Adrenal gland (tissue), 19 donors: ENCODE measurements at regions of chr4 and their contacts with region 1.

Region 1: DNA sequence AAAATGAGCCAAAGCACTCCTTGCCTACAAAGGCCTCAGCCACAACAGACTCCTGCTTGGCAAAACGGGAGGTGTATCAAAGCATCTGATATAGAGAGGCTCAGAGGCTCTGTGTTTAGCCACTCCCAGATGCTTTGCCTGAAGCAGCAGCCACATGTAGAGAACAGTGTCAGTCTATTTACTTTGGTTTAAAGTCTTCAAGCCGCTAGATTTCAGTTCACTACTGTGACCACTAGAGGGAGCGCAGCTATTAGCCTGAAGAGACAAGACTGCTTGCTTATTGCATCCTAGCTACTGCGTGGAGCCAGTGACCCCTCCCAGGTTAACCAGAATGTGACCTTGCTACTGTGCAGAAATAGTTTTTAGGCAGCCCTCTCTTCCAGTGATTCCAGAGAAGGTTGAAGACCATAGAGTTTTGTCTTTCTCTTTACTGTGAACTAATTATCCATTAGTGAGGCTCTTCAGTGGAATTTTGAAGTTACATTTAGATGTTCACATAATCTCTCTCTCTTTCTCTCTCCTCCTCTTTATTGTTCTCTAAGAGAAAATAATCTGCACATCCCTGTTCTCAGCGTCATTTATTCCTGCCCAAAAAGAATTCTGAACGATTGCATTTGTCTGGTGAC is 39.3 kb downstream of the BMP3 start:
- DNase-seq: peak; percentile 57 to 87 (median 71)
- H3K4me3 ChIP-seq: no peak overlapping the region
- H3K27ac ChIP-seq: no peak overlapping the region
- H3K4me1 ChIP-seq: no peaks in the 10 kb centered on the region
- H3K27me3 ChIP-seq: no peaks in the 10 kb centered on the region
- CTCF ChIP-seq: peak; percentile 54 to 87 (median 70)
- POLR2A ChIP-seq: no peak

Region 2: DNA sequence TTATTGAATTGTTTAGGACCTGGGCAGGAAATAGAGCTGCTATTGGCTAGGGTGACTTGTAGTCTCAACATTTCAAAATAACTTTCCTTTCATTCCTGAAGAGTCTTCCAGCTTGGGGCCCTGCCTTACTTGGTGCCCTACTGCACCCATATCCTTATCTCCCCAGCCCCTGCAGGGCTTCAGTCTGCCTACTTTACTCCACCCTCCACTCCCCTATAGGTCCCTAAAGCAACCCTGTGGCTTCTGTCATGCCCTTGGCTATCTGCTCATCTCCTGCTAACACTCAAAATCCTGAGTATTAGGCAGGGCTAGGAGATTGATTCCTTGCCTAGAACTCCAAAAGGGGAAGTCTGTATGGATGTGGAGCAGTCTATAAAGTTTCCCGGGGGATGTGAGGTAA is 202.9 kb after region 1 on chr4:
- intact Hi-C with region 1: no loop called
- DNase-seq: no peak
- H3K4me3 ChIP-seq: no peak overlapping the region
- H3K27ac ChIP-seq: no peak overlapping the region
- H3K4me1 ChIP-seq: no peaks in the 10 kb centered on the region
- H3K27me3 ChIP-seq: no peaks in the 10 kb centered on the region
- CTCF ChIP-seq: no peak
- POLR2A ChIP-seq: no peak

Region 3: GRCh38 chr4:81351654-81352445 is 282.0 kb after region 1 on chr4:
- intact Hi-C with region 1: loop called in 1 of 2 experiments (anchors 10 kb)
- DNase-seq: peak; percentile 33 to 86 (median 70)
- H3K4me3 ChIP-seq: no peak overlapping the region
- H3K27ac ChIP-seq: no peak overlapping the region
- H3K4me1 ChIP-seq: no peaks in the 10 kb centered on the region
- H3K27me3 ChIP-seq: no peaks in the 10 kb centered on the region
- CTCF ChIP-seq: peak; percentile 45 to 92 (median 59)
- POLR2A ChIP-seq: no peak

Region 4: DNA sequence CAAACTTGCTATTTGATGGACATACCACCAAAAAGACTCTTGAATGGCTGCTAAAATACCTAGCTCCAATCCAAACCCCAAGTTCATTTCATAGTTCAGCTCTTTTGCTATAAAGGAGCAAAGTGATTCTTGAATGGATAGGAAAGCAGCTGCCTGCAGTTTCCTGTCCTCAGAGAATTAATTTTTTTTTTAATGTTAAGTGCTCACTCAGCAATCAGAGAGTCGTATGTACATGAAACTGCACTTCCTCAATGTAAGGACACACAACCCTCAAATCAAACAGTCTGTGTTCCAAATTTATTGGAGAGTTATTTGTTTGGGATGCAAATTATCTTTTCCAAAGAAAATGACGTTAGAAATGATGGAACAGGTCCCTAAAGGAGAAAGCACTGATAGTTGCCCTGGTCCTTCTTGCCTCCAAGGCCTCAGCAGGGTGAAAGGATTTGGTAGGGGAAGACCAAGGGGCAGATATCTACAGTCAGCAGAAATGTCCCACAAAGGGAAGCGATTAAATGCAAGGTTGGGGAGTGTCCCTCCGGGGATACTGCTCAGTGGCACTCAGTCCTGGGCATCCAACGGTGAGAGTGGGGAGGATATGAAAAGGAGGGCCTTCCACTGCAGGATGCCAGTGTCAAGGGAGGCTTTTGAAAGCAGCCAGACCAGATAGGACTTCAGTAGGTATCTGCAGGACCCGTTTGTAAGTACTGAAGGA is 469.1 kb after region 1 on chr4:
- intact Hi-C with region 1: no loop called
- DNase-seq: no peak
- H3K4me3 ChIP-seq: no peak overlapping the region
- H3K27ac ChIP-seq: no peak overlapping the region
- H3K4me1 ChIP-seq: no peaks in the 10 kb centered on the region
- H3K27me3 ChIP-seq: no peaks in the 10 kb centered on the region
- CTCF ChIP-seq: no peak
- POLR2A ChIP-seq: no peak